Activated B cell treated with CpG ODN at 0.5 μM for 24 hours (primary cell): ENCODE measurements at regions of chr19 and their contacts with region 1.

Region 1: GRCh38 chr19:21328885-21329605 is at the start of gene ZNF708:
- DNase-seq: peak; percentile 55
- ATAC-seq: peak; percentile 99
- H3K4me3 Mint-ChIP-seq: peak within 1 kb of the TSS; percentile 99
- H3K27ac Mint-ChIP-seq: peak within 1 kb of the TSS; percentile 99
- H3K4me1 Mint-ChIP-seq: peaks cover 39% of the 10 kb centered on the region
- H3K27me3 Mint-ChIP-seq: no peaks in the 10 kb centered on the region
- CTCF ChIP-seq: no peak
- total RNA-seq, gene ZNF708: 24.3 and 30.6 TPM in 2 replicates

Region 2: DNA sequence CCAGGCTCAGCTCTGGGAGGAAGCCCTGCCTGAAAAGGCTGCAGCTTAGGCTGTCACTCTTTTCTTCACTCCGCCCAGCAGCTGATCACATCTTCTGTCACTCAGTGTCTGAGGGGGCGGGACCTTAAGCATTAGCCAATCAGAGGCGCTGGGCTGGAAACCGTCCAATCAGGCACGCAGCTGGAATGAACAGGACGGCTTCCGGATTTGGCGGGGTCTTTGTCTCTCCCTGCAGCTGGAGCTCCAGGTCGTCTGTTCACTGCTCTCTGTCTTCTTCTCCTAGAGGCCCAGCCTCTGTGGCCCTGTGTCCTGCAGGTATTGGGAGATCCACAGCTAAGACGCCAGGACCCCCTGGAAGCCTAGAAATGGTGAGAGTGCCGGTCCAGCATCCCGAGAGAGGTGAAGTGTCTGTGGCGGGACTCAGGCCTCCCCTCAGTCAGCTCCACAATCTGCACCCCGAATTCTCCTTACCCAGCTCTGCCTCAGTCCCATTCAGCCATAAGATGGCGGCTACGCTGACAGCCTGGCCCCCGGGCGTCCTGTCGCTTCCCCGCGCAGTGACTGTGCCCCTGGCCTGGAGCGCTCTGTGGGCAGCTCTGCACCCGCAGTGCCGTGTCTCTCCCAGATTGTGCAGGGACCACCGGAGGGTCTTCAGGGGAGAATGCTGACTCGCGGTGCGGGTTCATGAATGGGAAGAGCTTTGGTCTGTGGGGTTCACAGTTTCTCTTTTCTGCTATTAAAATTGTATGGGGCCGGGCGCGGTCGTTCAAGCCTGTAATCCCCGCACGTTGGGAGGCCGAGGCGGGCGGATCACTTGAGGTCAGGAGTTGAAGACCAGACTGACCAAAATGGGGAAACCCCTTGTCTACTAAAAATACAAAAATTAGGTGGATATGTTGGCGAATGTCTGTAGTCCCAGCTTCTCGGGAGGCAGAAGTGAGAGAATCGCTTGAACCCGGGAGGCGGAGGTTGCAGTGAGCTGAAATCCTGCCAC is 552.7 kb before region 1 on chr19 and contains the start of gene ZNF66:
- CTCF ChIA-PET with region 1: no interaction called
- POLR2A ChIA-PET with region 1: no interaction called
- intact Hi-C with region 1: loop called (anchors 10 kb)
- DNase-seq: peak; percentile 85
- ATAC-seq: peak; percentile 98
- H3K4me3 Mint-ChIP-seq: peak within 1 kb of the TSS; percentile 98
- H3K27ac Mint-ChIP-seq: peak within 1 kb of the TSS; percentile 91
- H3K4me1 Mint-ChIP-seq: peaks cover 10% of the 10 kb centered on the region
- H3K27me3 Mint-ChIP-seq: no peaks in the 10 kb centered on the region
- CTCF ChIP-seq: no peak
- total RNA-seq, gene ZNF66: 17.5 and 19.1 TPM in 2 replicates

Region 3: GRCh38 chr19:21314676-21315075 is 14.4 kb before region 1 on chr19:
- CTCF ChIA-PET with region 1: no interaction called
- POLR2A ChIA-PET with region 1: interaction called, 6 read pairs
- intact Hi-C with region 1: loop called (anchors 1 kb)
- DNase-seq: no peak
- ATAC-seq: no peak
- H3K4me3 Mint-ChIP-seq: no peak overlapping the region
- H3K27ac Mint-ChIP-seq: no peak overlapping the region
- H3K4me1 Mint-ChIP-seq: peaks cover 26% of the 10 kb centered on the region
- H3K27me3 Mint-ChIP-seq: no peaks in the 10 kb centered on the region
- CTCF ChIP-seq: no peak

Region 4: DNA sequence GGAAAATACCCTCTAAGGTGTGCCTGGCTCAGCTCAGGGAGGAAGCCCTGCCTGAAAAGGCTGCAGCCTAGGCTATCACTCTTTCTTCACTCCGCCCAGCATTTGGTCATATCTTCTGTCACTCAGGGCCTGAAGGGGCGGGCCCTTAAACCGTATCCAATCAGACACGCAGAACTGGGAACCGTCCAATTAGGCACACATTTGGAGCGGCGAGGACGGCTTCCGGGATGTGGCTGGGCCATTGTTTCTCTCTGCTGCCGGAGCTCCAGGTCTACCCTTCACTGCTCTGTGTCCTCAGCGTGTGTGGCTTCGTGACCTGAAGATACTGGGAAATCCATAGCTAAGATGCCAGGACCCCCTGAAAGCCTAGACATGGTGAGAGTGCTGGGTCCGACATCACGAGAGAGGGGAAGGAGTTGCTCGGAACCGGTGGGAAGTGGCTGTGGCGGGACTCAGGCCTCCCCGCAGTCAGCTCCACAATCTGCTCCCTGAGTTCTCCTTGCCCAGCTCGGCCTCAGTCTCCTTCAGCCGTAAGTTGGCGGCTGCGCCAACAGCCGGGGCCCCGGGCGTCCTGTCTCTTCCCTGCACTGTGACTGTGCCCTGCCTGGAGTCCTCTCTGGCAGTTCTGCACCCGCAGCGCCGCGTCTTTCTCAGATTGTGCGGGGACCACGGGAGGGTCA is 68.0 kb after region 1 on chr19 and contains the start of gene ZNF493:
- CTCF ChIA-PET with region 1: no interaction called
- POLR2A ChIA-PET with region 1: interaction called, 25 read pairs
- intact Hi-C with region 1: loop called (anchors 1 kb)
- DNase-seq: peak; percentile 75
- ATAC-seq: peak; percentile 100
- H3K4me3 Mint-ChIP-seq: peak within 1 kb of the TSS; percentile 99
- H3K27ac Mint-ChIP-seq: peak within 1 kb of the TSS; percentile 91
- H3K4me1 Mint-ChIP-seq: peaks cover 29% of the 10 kb centered on the region
- H3K27me3 Mint-ChIP-seq: no peaks in the 10 kb centered on the region
- CTCF ChIP-seq: no peak
- total RNA-seq, gene ZNF493: 45.0 and 52.7 TPM in 2 replicates

Region 5: DNA sequence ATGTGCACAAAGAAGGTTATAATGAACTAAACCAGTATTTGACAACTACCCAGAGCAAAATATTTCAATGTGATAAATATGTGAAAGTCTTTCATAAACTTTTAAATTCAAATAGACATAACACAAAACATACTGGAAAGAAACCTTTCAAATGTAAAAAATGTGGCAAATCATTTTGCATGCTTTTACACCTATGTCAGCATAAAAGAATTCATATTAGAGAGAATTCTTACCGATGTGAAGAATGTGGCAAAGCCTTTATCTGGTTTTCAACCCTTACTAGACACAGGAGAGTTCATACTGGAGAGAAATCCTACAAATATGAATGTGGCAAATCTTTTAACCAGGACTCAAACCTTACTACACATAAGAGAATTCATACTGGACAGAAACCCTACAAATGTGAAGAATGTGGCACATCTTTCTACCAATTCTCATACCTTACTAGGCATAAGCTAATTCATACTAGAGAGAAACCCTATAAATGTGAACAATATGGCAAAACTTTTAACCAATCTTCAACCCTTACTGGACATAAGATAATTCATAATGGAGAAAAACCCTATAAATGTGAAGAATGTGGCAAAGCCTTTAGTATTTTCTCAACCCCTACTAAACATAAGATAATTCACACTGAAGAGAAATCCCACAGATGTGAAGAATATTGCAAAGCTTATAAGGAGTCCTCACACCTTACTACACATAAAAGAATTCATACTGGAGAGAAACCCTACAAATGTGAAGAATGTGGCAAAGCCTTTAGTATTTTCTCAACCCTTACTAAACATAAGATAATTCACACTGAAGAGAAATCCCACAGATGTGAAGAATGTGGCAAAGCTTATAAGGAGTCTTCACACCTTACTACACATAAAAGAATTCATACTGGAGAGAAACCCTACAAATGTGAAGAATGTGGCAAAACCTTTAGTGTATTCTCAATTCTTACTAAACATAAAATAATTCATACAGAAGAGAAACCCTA is 94.3 kb after region 1 on chr19:
- CTCF ChIA-PET with region 1: no interaction called
- POLR2A ChIA-PET with region 1: no interaction called
- intact Hi-C with region 1: no loop called
- DNase-seq: no peak
- ATAC-seq: no peak
- H3K4me3 Mint-ChIP-seq: no peak overlapping the region
- H3K27ac Mint-ChIP-seq: no peak overlapping the region
- H3K4me1 Mint-ChIP-seq: no peaks in the 10 kb centered on the region
- H3K27me3 Mint-ChIP-seq: no peaks in the 10 kb centered on the region
- CTCF ChIP-seq: no peak

Region 6: DNA sequence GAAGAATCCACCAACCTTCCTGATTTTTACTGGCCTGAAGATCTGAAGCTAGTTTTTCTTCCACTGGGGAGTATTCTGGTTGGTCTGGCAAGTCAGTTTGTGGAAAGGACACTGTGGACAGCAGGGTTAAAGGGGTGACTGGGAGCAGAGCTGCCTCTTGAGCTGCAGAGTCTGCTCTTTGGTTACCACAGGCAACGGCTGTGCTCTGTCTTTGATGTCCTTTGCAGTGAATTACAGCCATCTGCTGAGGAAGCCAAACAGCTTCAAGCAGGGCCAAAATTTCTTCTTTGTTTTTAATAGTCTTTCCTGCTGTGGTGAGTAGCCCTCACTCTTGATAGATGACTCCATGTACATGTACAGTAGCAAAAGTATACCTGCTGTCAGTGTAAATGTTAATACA is 362.6 kb after region 1 on chr19:
- CTCF ChIA-PET with region 1: no interaction called
- POLR2A ChIA-PET with region 1: no interaction called
- intact Hi-C with region 1: no loop called
- DNase-seq: no peak
- ATAC-seq: no peak
- H3K4me3 Mint-ChIP-seq: no peak overlapping the region
- H3K27ac Mint-ChIP-seq: no peak overlapping the region
- H3K4me1 Mint-ChIP-seq: no peaks in the 10 kb centered on the region
- H3K27me3 Mint-ChIP-seq: no peaks in the 10 kb centered on the region
- CTCF ChIP-seq: no peak

Region 7: GRCh38 chr19:21767065-21767800 is 438.2 kb after region 1 on chr19 and contains the start of gene ZNF100:
- CTCF ChIA-PET with region 1: no interaction called
- POLR2A ChIA-PET with region 1: interaction called, 5 read pairs
- intact Hi-C with region 1: loop called (anchors 10 kb)
- DNase-seq: peak; percentile 70
- ATAC-seq: peak; percentile 98
- H3K4me3 Mint-ChIP-seq: peak within 1 kb of the TSS; percentile 95
- H3K27ac Mint-ChIP-seq: peak within 1 kb of the TSS; percentile 88
- H3K4me1 Mint-ChIP-seq: peaks cover 18% of the 10 kb centered on the region
- H3K27me3 Mint-ChIP-seq: no peaks in the 10 kb centered on the region
- CTCF ChIP-seq: no peak
- total RNA-seq, gene ZNF100: 21.1 and 22.4 TPM in 2 replicates